T-cell (primary cell): ENCODE measurements at regions of chr20 and their contacts with region 1.

Region 1: GRCh38 chr20:37192137-37192854 is 12.9 kb upstream of the MROH8 start:
- DNase-seq: peak; percentile 29 to 83 (median 63)
- ATAC-seq: peak; percentile 66 to 76 (median 72)
- H3K4me3 ChIP-seq: no peak overlapping the region
- H3K4me3 Mint-ChIP-seq: peak overlapping the region in 1 of 3 donors; percentile 58
- H3K27ac ChIP-seq: no peak overlapping the region
- H3K27ac Mint-ChIP-seq: peak overlapping the region; percentile 55 to 65
- H3K4me1 ChIP-seq: peaks cover 14 to 61% of the 10 kb centered on the region in 2 experiments
- H3K4me1 Mint-ChIP-seq: peaks cover 79 to 83% (median 79%) of the 10 kb centered on the region in 3 donors
- H3K27me3 ChIP-seq: no peaks in the 10 kb centered on the region
- H3K27me3 Mint-ChIP-seq: no peaks in the 10 kb centered on the region

Region 2: DNA sequence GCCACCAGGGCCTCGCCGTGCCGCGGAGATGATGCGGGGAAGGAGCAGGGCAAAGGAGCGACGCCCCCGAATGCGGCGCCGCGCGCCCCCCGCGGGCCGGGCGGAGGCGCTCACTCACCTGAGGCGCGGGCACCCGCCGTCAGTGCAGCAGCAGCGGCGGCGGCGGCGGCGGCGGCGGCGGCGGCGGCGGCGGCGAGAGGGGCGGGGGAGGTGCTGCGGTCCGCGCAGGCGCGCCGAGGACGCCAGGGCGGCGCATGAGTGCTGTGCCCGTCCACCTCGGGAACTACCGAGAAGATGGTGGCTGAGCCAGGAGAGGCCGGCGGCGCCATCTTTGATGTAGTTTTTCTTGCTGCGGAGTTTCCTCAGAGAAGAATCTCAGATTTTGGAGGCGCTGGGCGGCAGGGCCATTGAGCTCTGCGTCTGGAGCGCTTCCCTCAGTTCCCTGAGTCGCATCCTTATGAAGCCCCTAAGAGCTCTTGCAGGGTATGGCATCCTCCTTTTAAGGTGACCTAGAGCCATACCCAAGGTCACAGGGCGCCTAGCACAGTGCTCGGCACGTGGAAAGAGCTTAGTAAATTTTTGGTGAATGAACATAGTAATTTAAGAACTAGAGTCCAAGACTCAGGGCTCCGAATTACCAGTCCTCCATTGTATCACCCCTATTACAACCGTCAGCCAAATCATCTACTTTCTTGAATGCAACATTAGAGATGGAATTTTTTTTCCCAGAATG is 446.2 kb before region 1 on chr20 and contains the start of gene NDRG3:
- CTCF ChIA-PET with region 1: no interaction called
- POLR2A ChIA-PET with region 1: no interaction called
- DNase-seq: peak; percentile 76 to 97 (median 91)
- ATAC-seq: peak; percentile 97 to 99 (median 98)
- H3K4me3 ChIP-seq: peak within 1 kb of the TSS; percentile 76 to 80
- H3K4me3 Mint-ChIP-seq: peak within 1 kb of the TSS; percentile 88 to 91 (median 90)
- H3K27ac ChIP-seq: peak within 1 kb of the TSS; percentile 48
- H3K27ac Mint-ChIP-seq: peak within 1 kb of the TSS; percentile 87 to 91
- H3K4me1 ChIP-seq: peaks cover 2 to 18% of the 10 kb centered on the region in 2 experiments
- H3K4me1 Mint-ChIP-seq: peaks cover 24 to 34% (median 31%) of the 10 kb centered on the region in 3 donors
- H3K27me3 ChIP-seq: no peaks in the 10 kb centered on the region
- H3K27me3 Mint-ChIP-seq: no peaks in the 10 kb centered on the region
- total RNA-seq, gene NDRG3: 25.8 to 29.5 (median 28.3) TPM

Region 3: DNA sequence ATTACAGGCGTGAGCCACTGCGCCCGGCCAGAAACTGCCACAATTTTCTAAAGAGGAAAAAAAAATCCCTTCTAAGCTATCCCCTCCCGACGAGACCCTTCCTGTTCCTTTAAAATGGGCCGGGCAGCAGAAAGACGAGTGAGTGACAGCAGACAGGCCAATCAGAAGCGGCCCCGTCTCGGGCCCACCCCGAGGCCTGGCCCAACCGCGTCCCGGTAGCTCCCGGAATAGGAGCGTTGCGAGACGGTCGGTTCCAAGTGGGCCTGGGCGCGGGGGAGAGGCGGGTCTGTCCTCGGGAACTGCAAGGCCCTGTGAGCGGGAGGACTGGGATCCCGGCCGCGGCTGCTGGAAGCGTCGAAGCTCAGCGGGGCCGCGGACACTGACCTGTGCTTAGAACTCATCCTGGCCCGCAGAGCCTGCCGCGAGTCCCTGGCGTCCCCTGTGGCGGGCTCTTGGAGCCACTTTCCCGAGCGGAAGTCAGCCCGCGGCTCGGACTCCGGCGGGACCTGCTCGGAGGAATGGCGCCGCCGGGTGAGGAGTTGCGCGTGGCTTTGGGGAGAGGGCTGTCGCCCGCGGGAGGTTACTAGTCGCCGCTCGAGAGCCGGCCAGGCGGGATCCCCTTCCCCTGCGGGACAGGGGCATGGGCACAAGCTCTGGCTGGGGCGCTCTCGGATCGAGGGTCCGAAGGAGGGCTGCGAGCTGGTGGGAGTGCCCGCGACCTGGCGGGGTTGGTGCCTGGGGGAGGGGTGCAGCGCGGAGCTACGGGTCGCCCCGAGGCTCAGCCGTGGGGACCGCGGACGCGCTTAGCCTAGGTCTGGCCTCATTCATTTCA is 13.2 kb before region 1 on chr20 and contains the starts of genes MROH8 and RPN2:
- CTCF ChIA-PET with region 1: interaction called, 5 to 23 read pairs
- POLR2A ChIA-PET with region 1: no interaction called
- DNase-seq: peak; percentile 88 to 98 (median 94)
- ATAC-seq: peak; percentile 96 to 98 (median 96)
- H3K4me3 ChIP-seq: peak within 1 kb of the TSS; percentile 89 to 98
- H3K4me3 Mint-ChIP-seq: peak within 1 kb of the TSS; percentile 96 to 99 (median 98)
- H3K27ac ChIP-seq: peak within 1 kb of the TSS; percentile 89
- H3K27ac Mint-ChIP-seq: peak within 1 kb of the TSS; percentile 98 to 99
- H3K4me1 ChIP-seq: peaks cover 12 to 37% of the 10 kb centered on the region in 2 experiments
- H3K4me1 Mint-ChIP-seq: peaks cover 41 to 44% (median 44%) of the 10 kb centered on the region in 3 donors
- H3K27me3 ChIP-seq: no peaks in the 10 kb centered on the region
- H3K27me3 Mint-ChIP-seq: no peaks in the 10 kb centered on the region
- total RNA-seq, gene MROH8: 0.70 to 2.5 (median 1.5) TPM
- total RNA-seq, gene RPN2: 88.8 to 130 (median 121) TPM

Region 4: GRCh38 chr20:37534401-37535157 is 342.3 kb after region 1 on chr20:
- CTCF ChIA-PET with region 1: interaction called, 3 to 11 read pairs
- POLR2A ChIA-PET with region 1: no interaction called
- DNase-seq: peak in 20 of 35 experiments; percentile 13 to 84 (median 33)
- ATAC-seq: peak; percentile 82 to 92 (median 85)
- H3K4me3 ChIP-seq: no peak overlapping the region
- H3K4me3 Mint-ChIP-seq: no peak overlapping the region
- H3K27ac ChIP-seq: no peak overlapping the region
- H3K27ac Mint-ChIP-seq: no peak overlapping the region
- H3K4me1 ChIP-seq: peaks cover 0 to 3% of the 10 kb centered on the region in 2 experiments
- H3K4me1 Mint-ChIP-seq: peaks cover 0 to 3% (median 2%) of the 10 kb centered on the region in 3 donors
- H3K27me3 ChIP-seq: no peaks in the 10 kb centered on the region
- H3K27me3 Mint-ChIP-seq: peaks cover 4 to 10% of the 10 kb centered on the region in 2 donors